Mammary epithelial cell (primary cell): ENCODE measurements at regions of chr17 and their contacts with region 1.

Region 1: GRCh38 chr17:80931936-80932265 is 59.7 kb upstream of the CHMP6 start:
- DNase-seq: peak; percentile 25
- H3K4me3 ChIP-seq: no peak overlapping the region
- H3K27ac ChIP-seq: no peak overlapping the region
- H3K4me1 ChIP-seq: no peaks in the 10 kb centered on the region
- H3K27me3 ChIP-seq: peaks cover 1% of the 10 kb centered on the region
- CTCF ChIP-seq: no peak

Region 2: GRCh38 chr17:80945736-80946135 is 13.8 kb after region 1 on chr17:
- CTCF ChIA-PET with region 1: no interaction called
- dilution Hi-C with region 1: no loop called
- in situ Hi-C with region 1: no loop called
- intact Hi-C with region 1: loop called (anchors 1 kb)
- DNase-seq: no peak
- H3K4me3 ChIP-seq: no peak overlapping the region
- H3K27ac ChIP-seq: no peak overlapping the region
- H3K4me1 ChIP-seq: no peaks in the 10 kb centered on the region
- H3K27me3 ChIP-seq: no peaks in the 10 kb centered on the region
- CTCF ChIP-seq: no peak

Region 3: GRCh38 chr17:80959330-80960036 is 27.6 kb after region 1 on chr17:
- CTCF ChIA-PET with region 1: no interaction called
- dilution Hi-C with region 1: loop called (anchors 5 kb)
- in situ Hi-C with region 1: no loop called
- intact Hi-C with region 1: no loop called
- DNase-seq: no peak
- H3K4me3 ChIP-seq: no peak overlapping the region
- H3K27ac ChIP-seq: no peak overlapping the region
- H3K4me1 ChIP-seq: no peaks in the 10 kb centered on the region
- H3K27me3 ChIP-seq: no peaks in the 10 kb centered on the region
- CTCF ChIP-seq: no peak